ENCODE measurements at regions of chr11 and their contacts with region 1.

Region 1: DNA sequence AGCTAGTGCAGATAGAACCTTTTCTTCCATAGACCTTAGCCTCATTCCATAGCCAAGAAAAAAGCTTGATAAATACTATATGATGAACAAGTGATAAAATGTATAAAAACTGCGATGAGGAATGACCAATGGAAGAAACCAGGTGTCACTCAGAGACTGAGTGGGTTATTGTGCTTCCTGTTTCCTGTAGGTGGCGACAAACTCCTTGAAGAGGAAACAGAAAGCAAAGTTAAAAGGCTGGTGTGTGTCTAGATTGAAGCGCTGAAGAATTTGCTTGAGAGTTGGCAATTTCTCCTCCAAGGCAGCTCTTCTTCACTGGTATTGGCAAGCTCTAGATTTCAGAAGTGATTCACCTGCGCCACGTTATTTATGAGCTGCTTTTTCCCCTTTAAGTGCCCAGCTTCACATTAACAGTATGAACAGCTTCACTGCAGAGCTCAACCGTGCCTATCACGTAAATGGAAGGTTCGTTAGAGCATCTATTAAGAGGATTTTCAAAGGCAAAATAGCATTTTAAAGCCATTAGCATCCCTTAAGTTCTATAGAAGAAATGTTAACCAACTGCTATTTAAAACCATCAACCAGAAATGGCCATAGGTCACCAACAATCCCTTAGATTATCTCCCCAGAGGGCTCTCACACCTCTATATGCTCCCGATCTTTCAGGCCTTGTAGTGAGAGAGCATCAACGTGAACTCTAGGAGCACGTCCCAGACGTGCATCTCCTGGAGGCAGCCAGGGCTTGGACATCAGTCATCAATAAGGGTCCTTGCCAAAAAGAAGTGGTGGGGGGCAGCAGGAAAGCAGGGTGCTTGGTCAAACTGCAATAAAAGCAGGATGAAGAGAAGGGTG is 179.4 kb downstream of the CADM1 start:
- DNase-seq: no peak
- ATAC-seq: peak; percentile 91

Region 2: DNA sequence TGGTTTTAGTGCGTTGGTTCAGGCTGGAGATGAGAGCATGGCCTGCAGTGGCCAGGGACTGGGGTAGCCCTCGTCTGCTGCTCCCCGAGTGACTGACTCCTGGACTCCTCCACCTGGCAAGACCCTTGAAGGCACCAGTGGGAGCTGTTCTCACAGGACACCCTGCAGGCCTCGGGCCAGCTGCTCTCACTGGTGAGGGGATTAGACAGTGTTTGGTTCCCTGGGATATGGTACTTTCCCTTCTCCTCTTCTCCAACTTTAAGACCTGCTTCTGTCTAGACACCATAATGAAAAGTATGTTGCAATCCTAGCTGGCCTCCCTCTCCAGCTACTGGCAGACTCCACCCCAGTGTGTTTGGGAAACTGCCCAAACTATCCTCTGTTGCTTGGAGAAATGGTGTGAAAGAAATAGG is 348.2 kb after region 1 on chr11:
- intact Hi-C with region 1: loop called (anchors 10 kb)
- DNase-seq: peak; percentile 46
- ATAC-seq: peak; percentile 90

Region 3: DNA sequence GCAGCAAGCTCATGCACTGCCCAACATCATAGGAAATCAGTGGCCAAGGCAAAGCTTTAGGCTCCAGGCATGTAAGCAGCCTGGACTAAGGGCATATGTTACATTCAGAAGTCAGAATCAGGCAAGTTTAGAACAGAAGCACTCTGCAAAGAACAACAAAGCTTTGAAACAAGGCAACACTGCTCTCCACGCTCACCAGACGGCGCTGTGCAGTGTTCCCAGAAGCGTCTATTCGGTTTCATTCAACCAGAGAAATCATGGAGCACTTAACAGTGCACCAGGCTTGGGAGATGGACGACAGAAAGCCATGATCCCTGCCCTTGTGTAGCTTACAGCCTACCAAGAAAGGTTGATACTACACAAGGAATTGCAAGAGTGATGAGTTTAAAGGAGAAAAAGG is 892.2 kb after region 1 on chr11:
- intact Hi-C with region 1: loop called (anchors 10 kb)
- DNase-seq: peak; percentile 64
- ATAC-seq: peak; percentile 71

Region 4: DNA sequence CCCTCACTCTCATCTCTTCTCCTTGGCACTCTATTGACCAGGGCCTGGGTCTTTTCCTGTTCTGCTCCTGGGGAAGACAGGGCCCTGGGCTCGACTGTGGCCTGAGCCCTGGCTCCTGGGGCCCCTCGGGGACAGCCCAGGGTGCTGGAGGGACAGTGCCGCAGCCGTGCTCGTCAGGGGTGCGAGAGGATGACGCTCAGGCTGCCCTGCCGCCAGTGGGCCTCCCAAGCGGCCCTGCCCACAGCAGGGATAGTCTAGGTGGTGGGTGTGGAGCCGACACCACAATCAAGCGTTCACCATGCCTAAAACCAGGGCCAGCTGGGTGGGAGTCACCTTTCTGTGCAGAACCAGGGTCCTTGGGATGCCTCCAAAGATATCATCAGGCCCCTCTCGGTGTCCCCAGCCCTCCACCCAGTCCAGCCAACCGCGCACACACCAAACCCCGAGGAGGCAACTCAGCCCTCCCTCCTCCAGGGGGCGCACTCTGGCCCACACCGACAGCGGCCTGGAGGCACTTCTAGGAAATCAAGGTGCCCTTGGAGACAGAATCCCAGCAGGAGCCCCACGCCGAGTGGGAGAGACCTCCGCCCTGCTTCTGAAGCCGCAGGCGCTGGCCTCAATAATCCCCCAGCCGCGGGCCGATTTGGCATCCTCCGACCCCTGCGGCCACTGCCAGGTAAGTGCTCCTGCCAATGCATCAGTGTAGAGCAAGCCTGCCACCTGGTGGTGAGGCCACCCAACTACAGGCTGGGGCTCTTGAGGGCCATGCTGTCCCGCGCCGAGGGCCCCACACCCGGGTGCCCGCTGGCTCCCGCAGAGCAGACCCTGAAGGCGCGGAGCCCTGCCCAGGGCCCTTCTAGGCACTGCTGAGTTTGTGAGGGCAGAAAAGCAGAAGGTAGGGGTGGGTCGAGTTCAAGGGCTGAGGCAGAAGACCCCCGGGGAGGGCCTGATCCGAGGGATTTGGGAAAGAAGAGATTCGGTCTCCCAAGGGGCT is 951.5 kb after region 1 on chr11:
- intact Hi-C with region 1: loop called (anchors 5 kb)
- DNase-seq: peak; percentile 86
- ATAC-seq: peak; percentile 91